Activated CD4-positive, alpha-beta T cell treated with anti-CD3 and anti-CD28 coated beads, Interleukin-2, amount 10 ng/mL, durations not matched to agents 24 days and 14 days (primary cell): ENCODE measurements at regions of chr10 and their contacts with region 1.

Region 1: DNA sequence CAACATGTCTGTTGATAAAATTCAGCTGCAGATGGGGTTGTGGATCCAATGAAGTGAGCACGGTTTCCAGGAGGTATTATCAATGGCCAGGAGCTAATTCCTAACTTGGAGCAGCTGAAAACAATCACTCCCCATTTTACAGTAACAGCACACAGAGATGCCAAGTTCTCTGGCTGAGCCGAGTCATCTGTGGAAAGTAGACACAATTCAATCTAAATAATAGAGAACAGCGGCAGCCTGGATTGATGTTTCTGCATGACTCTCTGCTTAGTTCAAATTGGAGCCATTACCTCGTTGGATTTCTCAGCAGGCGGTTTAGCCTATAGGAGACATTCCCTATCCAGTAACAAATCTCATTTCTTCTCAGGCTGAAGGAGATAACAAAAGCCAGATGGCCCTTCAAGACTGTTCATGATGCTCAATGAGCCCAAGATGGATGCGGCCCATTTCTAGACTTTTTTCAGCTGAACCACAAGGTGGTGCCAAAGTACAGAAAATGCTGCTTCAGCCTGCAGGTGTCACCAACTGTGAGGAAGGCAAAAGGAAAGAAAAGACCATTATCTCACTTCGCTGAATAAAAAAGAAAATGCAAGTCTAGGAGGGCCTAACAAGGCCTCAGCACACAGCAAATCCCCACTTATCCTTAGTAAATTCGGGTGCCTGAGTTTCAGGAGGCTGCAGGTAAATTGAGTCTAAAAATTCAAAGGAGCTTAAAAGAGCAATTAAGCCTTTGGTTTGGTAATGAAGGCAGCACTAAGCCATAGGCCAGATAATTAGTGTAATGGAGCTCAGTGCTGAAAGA is 83.7 kb downstream of the SLC16A9 start:
- DNase-seq: peak; percentile 86
- H3K4me3 Mint-ChIP-seq: no peak overlapping the region
- H3K27ac Mint-ChIP-seq: no peak overlapping the region
- H3K4me1 Mint-ChIP-seq: peaks cover 2% of the 10 kb centered on the region
- H3K27me3 Mint-ChIP-seq: peaks cover 8% of the 10 kb centered on the region

Region 2: GRCh38 chr10:58952747-58953466 is 673.0 kb before region 1 on chr10:
- intact Hi-C with region 1: loop called (anchors 5 kb)
- DNase-seq: peak; percentile 70
- H3K4me3 Mint-ChIP-seq: no peak overlapping the region
- H3K27ac Mint-ChIP-seq: no peak overlapping the region
- H3K4me1 Mint-ChIP-seq: no peaks in the 10 kb centered on the region
- H3K27me3 Mint-ChIP-seq: no peaks in the 10 kb centered on the region

Region 3: GRCh38 chr10:59741048-59741447 is 115.1 kb after region 1 on chr10:
- intact Hi-C with region 1: no loop called
- DNase-seq: no peak
- H3K4me3 Mint-ChIP-seq: no peak overlapping the region
- H3K27ac Mint-ChIP-seq: no peak overlapping the region
- H3K4me1 Mint-ChIP-seq: no peaks in the 10 kb centered on the region
- H3K27me3 Mint-ChIP-seq: peaks cover 2% of the 10 kb centered on the region

Region 4: DNA sequence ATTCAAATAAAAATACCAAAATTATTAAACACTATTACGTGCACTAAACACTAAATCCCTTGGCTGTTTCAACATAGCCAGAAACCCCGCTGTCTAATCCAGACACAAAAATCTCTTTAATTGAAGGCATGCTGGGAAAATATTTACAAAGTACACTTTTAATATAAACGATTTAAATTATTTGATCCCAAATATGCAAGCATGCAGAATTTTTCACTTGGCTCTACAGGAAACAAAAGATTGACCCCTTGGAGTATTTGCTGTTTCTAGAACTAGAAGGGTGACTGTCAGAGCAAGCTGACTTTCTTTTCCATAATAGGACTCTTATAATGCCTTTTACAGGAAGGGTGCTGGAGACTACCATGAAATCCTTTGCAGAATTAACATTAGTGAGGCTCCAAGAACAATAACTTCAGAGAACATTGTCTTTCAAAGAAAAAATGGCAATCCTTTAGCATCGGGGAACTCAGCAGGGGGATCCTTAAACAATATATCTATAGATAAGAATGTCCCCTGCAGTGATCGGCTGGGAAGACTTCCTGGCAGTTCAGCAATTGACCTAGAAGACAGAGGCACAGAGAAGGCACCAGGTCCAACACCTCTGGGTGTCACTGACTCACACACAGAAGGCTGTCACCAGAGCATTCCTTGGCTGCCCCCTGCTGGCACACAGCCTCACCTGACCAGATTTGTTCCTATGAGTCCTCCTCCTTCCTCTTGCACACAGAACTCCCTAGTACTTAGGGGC is 183.1 kb after region 1 on chr10:
- intact Hi-C with region 1: loop called (anchors 1 kb)
- DNase-seq: peak; percentile 91
- H3K4me3 Mint-ChIP-seq: no peak overlapping the region
- H3K27ac Mint-ChIP-seq: no peak overlapping the region
- H3K4me1 Mint-ChIP-seq: peaks cover 9% of the 10 kb centered on the region
- H3K27me3 Mint-ChIP-seq: no peaks in the 10 kb centered on the region

Region 5: DNA sequence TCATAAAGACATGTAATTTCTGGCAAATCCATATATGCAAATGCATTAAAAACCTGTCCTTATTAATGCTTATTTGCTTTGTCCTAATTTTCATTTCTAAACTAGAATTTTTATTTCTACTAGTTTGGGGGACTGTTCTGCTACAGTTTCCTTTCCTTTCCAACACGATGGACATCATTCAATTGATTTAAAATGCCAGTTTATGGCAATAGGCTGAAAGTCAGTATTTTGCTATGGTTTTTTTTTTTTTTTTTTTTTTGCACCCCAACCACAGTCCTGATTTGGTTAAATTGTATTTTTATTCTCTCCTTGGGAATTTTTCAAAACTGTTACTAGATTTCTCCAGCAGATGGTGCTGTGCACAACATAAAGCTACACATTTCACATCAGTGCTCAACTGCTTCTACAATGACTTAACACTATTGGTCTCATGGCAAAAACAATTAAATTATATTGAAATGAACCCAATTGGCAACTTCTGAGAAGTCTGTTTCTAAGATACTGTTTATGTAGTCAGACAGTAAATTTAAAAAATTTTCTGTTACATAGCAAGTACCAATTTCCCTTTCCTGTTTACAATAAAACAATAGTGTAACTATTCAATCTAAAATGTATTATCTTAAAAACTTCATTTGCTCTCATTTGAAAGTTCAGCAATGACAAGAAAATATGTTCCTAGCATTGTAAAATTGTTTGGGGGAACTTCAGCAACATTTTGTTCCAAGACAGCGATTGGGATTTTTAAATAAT is 474.3 kb after region 1 on chr10:
- intact Hi-C with region 1: loop called (anchors 5 kb)
- DNase-seq: peak; percentile 66
- H3K4me3 Mint-ChIP-seq: no peak overlapping the region
- H3K27ac Mint-ChIP-seq: no peak overlapping the region
- H3K4me1 Mint-ChIP-seq: no peaks in the 10 kb centered on the region
- H3K27me3 Mint-ChIP-seq: no peaks in the 10 kb centered on the region

Region 6: DNA sequence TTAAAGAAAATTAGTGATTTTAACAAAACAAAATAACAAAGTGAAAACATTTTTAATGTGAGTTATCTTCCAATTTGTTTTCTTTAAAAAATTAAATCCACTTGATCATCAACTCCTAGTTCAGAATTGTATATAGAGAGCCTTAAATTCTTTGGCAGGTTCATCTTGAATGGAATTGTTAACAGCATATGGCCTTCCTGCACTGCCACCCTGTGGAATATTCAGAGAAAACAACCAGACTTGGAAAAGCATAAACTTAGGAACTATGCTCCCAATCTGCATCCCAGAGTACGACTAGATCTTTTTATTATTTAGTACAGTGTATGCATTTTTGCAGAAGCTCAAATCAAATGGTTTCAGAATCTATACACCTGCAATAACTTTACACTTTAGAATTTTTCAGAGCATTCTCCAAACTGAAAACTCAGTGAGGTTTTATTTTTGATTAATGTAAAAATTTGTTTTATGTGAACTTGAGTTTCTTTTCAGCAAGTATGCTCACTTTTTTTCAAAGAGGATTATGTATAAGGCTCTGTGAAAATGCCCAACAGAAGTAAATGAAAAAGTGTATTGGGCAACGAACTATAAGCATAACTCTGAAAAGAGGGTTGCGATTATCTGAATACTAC is 808.6 kb after region 1 on chr10:
- intact Hi-C with region 1: loop called (anchors 1 kb)
- DNase-seq: no peak
- H3K4me3 Mint-ChIP-seq: no peak overlapping the region
- H3K27ac Mint-ChIP-seq: no peak overlapping the region
- H3K4me1 Mint-ChIP-seq: peaks cover 2% of the 10 kb centered on the region
- H3K27me3 Mint-ChIP-seq: no peaks in the 10 kb centered on the region